Cardiac septum (tissue), 1 donor: ENCODE measurements at regions of chr11 and their contacts with region 1.

Region 1: DNA sequence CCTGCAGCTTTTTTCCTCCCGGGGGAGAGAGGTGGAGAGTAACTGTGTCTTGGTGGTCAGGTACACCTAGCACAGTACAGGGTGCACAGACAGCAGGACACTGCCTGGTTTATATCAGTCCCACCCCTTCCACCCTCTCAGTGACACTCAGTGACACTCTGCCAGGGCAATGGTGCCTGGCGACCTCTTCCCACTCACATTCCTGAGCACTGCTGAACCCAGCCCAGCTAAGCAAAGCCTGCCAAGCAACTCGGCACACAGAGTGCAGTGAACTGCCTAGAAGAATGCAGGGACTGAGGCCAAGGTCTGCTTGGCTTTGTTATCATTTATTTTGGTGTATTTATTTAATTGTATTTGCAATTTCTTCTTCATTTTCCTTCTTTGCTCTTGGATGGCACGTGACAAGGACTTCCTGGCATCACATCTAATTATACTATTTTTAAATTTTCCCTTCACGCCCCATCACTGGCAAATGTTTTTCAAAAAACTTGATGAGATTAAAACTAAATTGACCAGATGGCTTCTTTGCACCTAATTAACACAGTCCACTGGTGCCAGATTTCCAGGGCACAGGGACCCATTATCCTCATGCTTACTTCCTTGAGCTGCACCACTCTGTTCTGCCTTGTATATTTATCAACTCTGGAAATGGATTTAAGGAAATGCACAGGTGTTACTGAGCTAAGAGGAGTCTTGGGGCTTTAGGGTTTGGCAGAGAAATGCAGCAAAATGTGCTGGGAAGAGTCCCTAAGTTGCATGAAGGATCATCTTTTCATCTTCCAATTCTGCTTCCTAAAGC is 205.6 kb downstream of the ADAMTS15 start:
- DNase-seq: peak; percentile 89

Region 2: GRCh38 chr11:130522284-130522961 is 131.6 kb before region 1 on chr11:
- intact Hi-C with region 1: loop called (anchors 5 kb)
- DNase-seq: peak; percentile 95

Region 3: GRCh38 chr11:130601141-130601540 is 52.9 kb before region 1 on chr11:
- intact Hi-C with region 1: loop called (anchors 5 kb)
- DNase-seq: no peak

Region 4: DNA sequence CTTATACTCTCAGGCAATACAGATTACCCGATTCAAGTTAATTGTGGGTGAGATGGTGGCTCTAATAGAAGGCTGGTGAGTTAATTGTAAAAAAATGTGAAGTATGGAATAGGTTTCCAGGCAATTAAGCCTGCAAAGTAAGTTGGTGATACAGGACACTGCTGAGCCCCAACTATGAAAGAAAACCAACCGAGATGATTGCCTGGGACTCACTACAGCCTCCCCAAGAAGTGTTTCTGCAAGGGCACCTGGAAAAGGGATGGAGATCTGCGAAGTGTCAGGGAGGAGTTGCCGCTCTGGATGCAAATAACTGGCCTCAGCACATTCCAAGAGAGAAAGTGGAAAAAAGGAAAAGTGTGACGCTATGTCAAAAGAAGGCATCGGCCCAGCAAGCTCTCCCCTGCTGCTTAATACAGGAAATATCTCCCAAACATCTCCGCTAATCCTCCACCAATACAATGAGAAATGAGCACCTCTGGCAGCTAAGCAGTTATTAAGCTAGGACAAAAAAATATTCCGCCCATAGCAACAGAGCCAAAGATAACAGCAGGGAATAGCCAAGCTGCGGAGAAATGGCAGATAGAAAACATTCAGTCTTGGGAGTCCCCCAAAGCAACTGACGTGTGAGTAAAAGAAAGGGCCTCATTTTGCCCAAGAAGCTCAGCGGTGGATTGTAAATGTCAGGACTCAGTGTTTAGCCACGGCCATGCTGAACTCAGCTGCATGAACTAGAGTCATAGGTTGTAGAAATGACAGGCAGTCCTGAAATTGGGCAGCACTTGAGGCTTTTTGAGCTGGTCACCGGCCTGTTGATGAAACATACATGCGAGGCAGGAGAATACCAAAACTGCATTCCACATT is 128.6 kb after region 1 on chr11:
- intact Hi-C with region 1: no loop called
- DNase-seq: no peak